ENCODE measurements at regions of chr12 and their contacts with region 1.

Region 1: GRCh38 chr12:8681041-8681902 is 16.5 kb upstream of the RIMKLB start:
- DNase-seq: no peak
- ATAC-seq: no peak
- H3K4me3 ChIP-seq: no peak overlapping the region
- H3K27ac ChIP-seq: no peak overlapping the region
- H3K4me1 ChIP-seq: no peaks in the 10 kb centered on the region
- H3K27me3 ChIP-seq: 0 out of 5 replicates have a peak, but pooled peaks cover 0 to 2% of the 10 kb centered on the region in 2 experiments
- CTCF ChIP-seq: no peak
- EP300 ChIP-seq: no peak
- POLR2A ChIP-seq: no peak
- RAD21 ChIP-seq: no peak

Region 2: DNA sequence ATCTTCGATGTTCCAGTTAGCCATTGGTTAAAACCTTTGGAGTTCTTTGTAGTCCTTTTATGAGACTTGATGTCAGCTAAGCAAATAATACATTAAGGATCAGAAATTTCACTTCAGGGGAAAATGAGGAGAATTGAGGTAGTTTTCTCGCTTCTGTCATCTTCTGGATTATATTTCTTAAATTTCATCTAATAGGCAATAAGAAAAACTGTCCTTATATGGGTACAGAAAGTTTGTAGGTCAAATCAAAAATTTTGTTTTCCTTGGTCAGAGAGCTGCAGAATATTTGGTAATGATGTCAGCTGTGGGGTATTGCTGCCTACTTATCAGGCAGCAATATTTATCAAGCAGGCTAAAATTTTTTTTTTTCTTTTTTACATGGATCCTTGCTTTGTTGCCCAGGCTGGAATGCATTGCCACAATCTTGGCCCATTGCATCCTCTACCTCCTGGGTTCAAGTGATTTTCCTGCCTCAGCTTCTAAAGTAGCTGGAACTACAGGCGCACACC is 53.7 kb after region 1 on chr12:
- CTCF ChIA-PET with region 1: no interaction called
- POLR2A ChIA-PET with region 1: no interaction called
- in situ Hi-C with region 1: no loop called
- intact Hi-C with region 1: no loop called
- DNase-seq: no peak
- ATAC-seq: no peak
- H3K4me3 ChIP-seq: no peak overlapping the region
- H3K27ac ChIP-seq: no peak overlapping the region
- H3K4me1 ChIP-seq: no peaks in the 10 kb centered on the region
- H3K27me3 ChIP-seq: no peaks in the 10 kb centered on the region
- CTCF ChIP-seq: no peak
- EP300 ChIP-seq: no peak
- POLR2A ChIP-seq: no peak
- RAD21 ChIP-seq: no peak

Region 3: GRCh38 chr12:9049520-9050133 is 368.4 kb after region 1 on chr12:
- CTCF ChIA-PET with region 1: interaction called, 15 read pairs
- POLR2A ChIA-PET with region 1: no interaction called
- in situ Hi-C with region 1: loop called (anchors 5 kb)
- intact Hi-C with region 1: loop called (anchors 2 kb)
- DNase-seq: peak; percentile 46
- ATAC-seq: peak; percentile 73
- H3K4me3 ChIP-seq: no peak overlapping the region
- H3K27ac ChIP-seq: no peak overlapping the region
- H3K4me1 ChIP-seq: no peaks in the 10 kb centered on the region
- H3K27me3 ChIP-seq: peaks cover 0 to 16% of the 10 kb centered on the region in 2 experiments; a peak in 4 of 5 replicates
- CTCF ChIP-seq: peak; percentile 49
- EP300 ChIP-seq: no peak
- POLR2A ChIP-seq: no peak
- RAD21 ChIP-seq: no peak

Measured in HepG2 (cell line).